ENCODE measurements at regions of chr5 and their contacts with region 1.

Region 1: DNA sequence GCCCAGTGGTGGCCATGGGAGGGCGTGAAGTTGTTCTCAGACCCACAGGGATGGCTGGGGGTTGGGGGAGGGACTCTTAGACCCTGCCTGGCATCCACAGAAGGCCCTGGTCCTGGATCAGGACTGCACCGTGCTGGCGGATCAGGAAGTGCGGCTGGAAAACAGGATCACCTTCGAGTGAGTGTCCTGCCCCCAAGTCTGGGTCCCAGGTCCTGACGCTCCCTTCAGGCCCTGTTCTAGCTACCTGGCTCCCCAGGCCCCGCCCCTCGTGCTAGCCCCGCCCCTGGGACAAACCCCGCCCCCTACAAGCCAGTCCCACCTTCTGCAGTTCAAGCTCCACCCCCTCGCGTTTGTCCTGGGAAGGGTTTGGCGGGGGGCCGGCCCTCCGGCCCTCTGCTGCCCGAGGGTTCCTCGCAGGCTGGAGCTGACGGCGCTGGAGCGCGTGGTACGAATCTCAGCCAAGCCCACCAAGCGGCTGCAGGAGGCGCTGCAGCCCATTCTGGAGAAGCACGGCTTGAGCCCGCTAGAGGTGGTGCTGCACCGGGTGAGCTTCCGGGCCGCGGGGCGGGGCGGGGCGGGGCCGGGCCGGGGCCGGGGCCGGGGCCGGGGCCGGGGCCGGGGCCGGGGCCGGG is 12.9 kb downstream of the RGS14 start:
- DNase-seq: no peak
- ATAC-seq: peak; percentile 87
- H3K4me3 ChIP-seq: no peak overlapping the region
- H3K27ac ChIP-seq: no peak overlapping the region
- H3K4me1 ChIP-seq: peaks cover 28% of the 10 kb centered on the region
- H3K27me3 ChIP-seq: no peaks in the 10 kb centered on the region
- CTCF ChIP-seq: peak; percentile 9 to 52 (median 45); a peak in 4 of 6 replicates
- EP300 ChIP-seq: no peak
- POLR2A ChIP-seq: no peak
- RAD21 ChIP-seq: no peak

Region 2: GRCh38 chr5:177276886-177277285 is 93.7 kb before region 1 on chr5:
- CTCF ChIA-PET with region 1: no interaction called
- POLR2A ChIA-PET with region 1: no interaction called
- RAD21 ChIA-PET with region 1: no interaction called
- SMC1A ChIA-PET with region 1: no interaction called
- in situ Hi-C with region 1: no loop called
- intact Hi-C with region 1: no loop called
- DNase-seq: no peak
- ATAC-seq: no peak
- H3K4me3 ChIP-seq: no peak overlapping the region
- H3K27ac ChIP-seq: no peak overlapping the region
- H3K4me1 ChIP-seq: no peaks in the 10 kb centered on the region
- H3K27me3 ChIP-seq: no peaks in the 10 kb centered on the region
- CTCF ChIP-seq: no peak
- EP300 ChIP-seq: no peak
- POLR2A ChIP-seq: no peak
- RAD21 ChIP-seq: no peak

Region 3: GRCh38 chr5:177357459-177358351 is 12.9 kb before region 1 on chr5 and contains the start of gene RGS14:
- CTCF ChIA-PET with region 1: interaction called, 19 read pairs
- POLR2A ChIA-PET with region 1: interaction called, 11 read pairs
- RAD21 ChIA-PET with region 1: interaction called, 7 read pairs
- SMC1A ChIA-PET with region 1: interaction called, 9 read pairs
- in situ Hi-C with region 1: no loop called
- intact Hi-C with region 1: no loop called
- DNase-seq: peak; percentile 77
- ATAC-seq: peak; percentile 91
- H3K4me3 ChIP-seq: peak within 1 kb of the TSS; percentile 99
- H3K27ac ChIP-seq: peak within 1 kb of the TSS; percentile 91
- H3K4me1 ChIP-seq: peaks cover 48% of the 10 kb centered on the region
- H3K27me3 ChIP-seq: no peaks in the 10 kb centered on the region
- CTCF ChIP-seq: no peak
- EP300 ChIP-seq: peak; percentile 25 to 55; a peak in 2 of 4 replicates
- POLR2A ChIP-seq: peak; percentile 82
- RAD21 ChIP-seq: no peak
- polyA plus RNA-seq, gene RGS14: 0.19 to 1.3 TPM

Region 4: GRCh38 chr5:177382423-177383029 is 11.9 kb after region 1 on chr5:
- CTCF ChIA-PET with region 1: interaction called, 37 read pairs
- POLR2A ChIA-PET with region 1: interaction called, 5 read pairs
- RAD21 ChIA-PET with region 1: interaction called, 11 read pairs
- SMC1A ChIA-PET with region 1: interaction called, 10 read pairs
- in situ Hi-C with region 1: no loop called
- intact Hi-C with region 1: no loop called
- DNase-seq: no peak
- ATAC-seq: peak; percentile 31
- H3K4me3 ChIP-seq: no peak overlapping the region
- H3K27ac ChIP-seq: no peak overlapping the region
- H3K4me1 ChIP-seq: peaks cover 6% of the 10 kb centered on the region
- H3K27me3 ChIP-seq: no peaks in the 10 kb centered on the region
- CTCF ChIP-seq: peak; percentile 17 to 25 (median 20); a peak in 3 of 6 replicates
- EP300 ChIP-seq: no peak
- POLR2A ChIP-seq: no peak
- RAD21 ChIP-seq: peak; percentile 29; the same call in 1 of the 2 replicates